ENCODE measurements at regions of chr1 and their contacts with region 1.

Region 1: DNA sequence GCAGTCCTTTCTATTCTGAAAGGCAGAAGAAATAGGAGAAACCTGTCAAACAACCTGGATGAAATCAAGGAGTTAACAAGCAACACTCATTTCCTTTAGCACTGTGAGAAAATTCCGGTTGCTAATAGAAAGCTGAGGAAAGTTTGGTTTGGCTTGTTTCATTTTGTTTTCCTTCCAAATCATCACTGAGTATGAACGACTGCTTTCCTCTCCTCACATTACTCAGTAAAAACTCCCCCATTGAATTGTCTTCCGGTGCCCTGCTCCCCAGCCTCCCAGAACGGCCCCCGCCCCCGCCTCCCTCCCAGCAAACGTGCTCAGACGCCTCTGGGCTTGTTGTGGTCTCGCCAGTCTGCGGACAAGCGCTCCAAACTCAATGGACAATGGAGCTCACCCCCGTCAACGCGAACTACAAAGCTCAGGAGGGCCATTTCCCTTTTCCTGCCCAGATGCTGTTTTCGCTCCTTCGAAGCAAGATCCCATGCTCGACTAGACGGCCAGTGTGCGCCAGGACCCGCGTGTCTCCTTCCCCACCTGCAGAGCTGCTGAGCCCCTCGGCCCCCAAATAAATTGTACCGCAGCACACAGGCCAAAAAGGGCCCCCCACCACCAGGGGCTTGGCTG is 747 bp downstream of the STX6 start:
- DNase-seq: peak; percentile 84
- H3K4me3 Mint-ChIP-seq: peak overlapping the region; percentile 94
- H3K27ac Mint-ChIP-seq: peak overlapping the region; percentile 97
- H3K4me1 Mint-ChIP-seq: peaks cover 37% of the 10 kb centered on the region
- H3K27me3 Mint-ChIP-seq: no peaks in the 10 kb centered on the region

Region 2: GRCh38 chr1:181105134-181106021 is 83.5 kb after region 1 on chr1:
- CTCF ChIA-PET with region 1: no interaction called
- POLR2A ChIA-PET with region 1: interaction called, 6 read pairs
- intact Hi-C with region 1: loop called (anchors 1 kb)
- DNase-seq: peak; percentile 93
- H3K4me3 Mint-ChIP-seq: peak overlapping the region; percentile 72
- H3K27ac Mint-ChIP-seq: peak overlapping the region; percentile 1
- H3K4me1 Mint-ChIP-seq: peaks cover 51% of the 10 kb centered on the region
- H3K27me3 Mint-ChIP-seq: peaks cover 19% of the 10 kb centered on the region